ENCODE measurements at regions of chr4 and their contacts with region 1.

Region 1: GRCh38 chr4:40309250-40309774 is 25.8 kb upstream of the CHRNA9 start:
- DNase-seq: peak; percentile 98
- ATAC-seq: peak; percentile 54
- H3K4me3 Mint-ChIP-seq: peak overlapping the region; percentile 54
- H3K27ac Mint-ChIP-seq: peak overlapping the region; percentile 83
- H3K4me1 Mint-ChIP-seq: peaks cover 90% of the 10 kb centered on the region
- H3K27me3 Mint-ChIP-seq: no peaks in the 10 kb centered on the region
- CTCF ChIP-seq: peak; percentile 90

Region 2: GRCh38 chr4:40193016-40193571 is 116.2 kb before region 1 on chr4:
- CTCF ChIA-PET with region 1: interaction called, 14 read pairs
- POLR2A ChIA-PET with region 1: interaction called, 326 read pairs
- intact Hi-C with region 1: no loop called
- DNase-seq: peak; percentile 50
- ATAC-seq: peak; percentile 13
- H3K4me3 Mint-ChIP-seq: peak overlapping the region; percentile 99
- H3K27ac Mint-ChIP-seq: peak overlapping the region; percentile 99
- H3K4me1 Mint-ChIP-seq: peaks cover 57% of the 10 kb centered on the region
- H3K27me3 Mint-ChIP-seq: no peaks in the 10 kb centered on the region
- CTCF ChIP-seq: no peak

Region 3: DNA sequence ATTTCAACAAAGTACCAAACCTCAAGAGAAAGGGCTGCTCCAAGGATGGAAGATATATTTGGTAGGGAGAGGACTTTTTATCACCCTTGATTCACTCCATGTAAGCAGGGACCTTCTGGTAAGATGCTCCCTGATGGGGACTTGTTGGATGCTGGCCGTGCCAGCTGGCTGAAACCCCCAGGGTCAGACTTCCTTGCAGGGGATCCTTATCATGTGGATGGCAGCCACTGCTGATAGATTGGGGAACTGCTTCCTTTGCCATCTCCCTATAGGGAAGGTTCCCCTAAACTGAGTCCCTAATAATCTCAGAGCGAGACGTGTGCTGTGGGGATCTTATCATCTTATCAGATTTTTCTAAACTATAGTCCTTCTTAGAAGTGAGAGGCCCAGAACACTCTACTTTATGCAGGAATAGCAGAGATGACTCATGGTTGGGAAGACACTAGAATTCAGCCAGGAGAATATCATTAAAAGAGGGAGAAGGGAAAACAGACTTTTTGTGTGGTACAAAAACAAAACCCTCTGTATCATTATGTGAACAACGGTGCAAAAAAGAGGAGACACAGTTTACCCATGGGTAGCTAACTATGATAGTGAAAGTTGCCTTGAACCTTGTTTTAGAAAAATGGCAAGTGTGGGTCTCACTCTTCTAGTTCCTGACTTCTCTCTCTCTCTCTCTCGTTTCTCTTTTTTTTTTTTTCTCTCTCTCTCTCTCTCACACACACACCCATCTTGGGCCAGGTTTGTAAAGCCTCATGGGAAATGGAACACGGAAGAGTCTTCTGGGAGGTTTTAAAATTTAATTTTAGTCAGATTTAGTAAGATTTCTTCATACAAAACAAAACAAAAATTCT is 96.4 kb before region 1 on chr4:
- CTCF ChIA-PET with region 1: interaction called, 26 read pairs
- POLR2A ChIA-PET with region 1: interaction called, 326 read pairs
- intact Hi-C with region 1: no loop called
- DNase-seq: peak; percentile 4
- ATAC-seq: peak; percentile 24
- H3K4me3 Mint-ChIP-seq: peak overlapping the region; percentile 99
- H3K27ac Mint-ChIP-seq: peak overlapping the region; percentile 96
- H3K4me1 Mint-ChIP-seq: peaks cover 74% of the 10 kb centered on the region
- H3K27me3 Mint-ChIP-seq: no peaks in the 10 kb centered on the region
- CTCF ChIP-seq: no peak

Region 4: GRCh38 chr4:40247350-40247749 is 62.0 kb before region 1 on chr4:
- CTCF ChIA-PET with region 1: interaction called, 32 read pairs
- POLR2A ChIA-PET with region 1: interaction called, 10 read pairs
- intact Hi-C with region 1: no loop called
- DNase-seq: peak; percentile 80
- ATAC-seq: peak; percentile 55
- H3K4me3 Mint-ChIP-seq: peak overlapping the region; percentile 77
- H3K27ac Mint-ChIP-seq: peak overlapping the region; percentile 95
- H3K4me1 Mint-ChIP-seq: peaks cover 75% of the 10 kb centered on the region
- H3K27me3 Mint-ChIP-seq: no peaks in the 10 kb centered on the region
- CTCF ChIP-seq: no peak

Region 5: DNA sequence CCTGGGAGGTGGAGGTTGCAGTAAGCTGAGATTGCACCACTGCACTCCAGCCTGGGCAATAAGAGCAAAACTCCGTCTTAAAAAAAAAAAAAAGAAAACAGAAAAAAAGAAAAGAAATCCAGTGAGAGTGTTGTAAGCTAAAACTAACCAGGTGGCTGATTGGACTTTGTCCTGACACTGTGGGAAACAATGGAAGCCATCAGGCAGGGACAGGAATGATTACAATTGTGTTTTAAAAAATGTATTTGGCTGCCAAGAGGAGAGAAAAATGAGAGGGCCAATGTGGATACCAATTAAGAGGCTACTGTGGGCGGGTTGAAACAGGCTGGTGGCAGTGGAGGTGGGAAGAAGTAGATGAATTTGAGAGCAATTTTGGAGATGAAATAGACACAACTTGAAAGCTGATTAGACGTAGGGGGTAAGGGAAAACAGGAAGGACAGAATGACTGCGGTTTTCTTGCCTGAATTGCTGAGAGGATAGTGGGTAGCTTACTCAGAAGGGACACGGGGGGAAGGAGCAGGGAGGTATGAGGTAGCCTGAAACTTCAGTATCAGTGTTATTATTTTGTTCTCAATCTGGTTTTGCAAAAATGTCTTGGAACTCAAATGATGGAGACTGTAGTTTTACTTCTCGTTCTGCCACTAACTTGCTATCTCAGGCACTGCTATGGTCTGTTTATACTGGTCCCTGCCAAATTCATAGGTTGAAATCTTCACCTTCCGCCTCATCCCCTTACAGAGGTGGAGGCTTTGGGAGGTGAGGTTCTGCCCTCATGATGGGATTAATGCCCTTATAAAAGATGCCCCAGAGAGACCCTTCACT is 19.7 kb before region 1 on chr4:
- CTCF ChIA-PET with region 1: interaction called, 20 read pairs
- POLR2A ChIA-PET with region 1: interaction called, 6 read pairs
- intact Hi-C with region 1: no loop called
- DNase-seq: no peak
- ATAC-seq: peak; percentile 70
- H3K4me3 Mint-ChIP-seq: peak overlapping the region; percentile 38
- H3K27ac Mint-ChIP-seq: peak overlapping the region; percentile 88
- H3K4me1 Mint-ChIP-seq: peaks cover 57% of the 10 kb centered on the region
- H3K27me3 Mint-ChIP-seq: no peaks in the 10 kb centered on the region
- CTCF ChIP-seq: no peak

Region 6: GRCh38 chr4:40564004-40564403 is 254.7 kb after region 1 on chr4:
- CTCF ChIA-PET with region 1: no interaction called
- POLR2A ChIA-PET with region 1: no interaction called
- intact Hi-C with region 1: no loop called
- DNase-seq: no peak
- ATAC-seq: no peak
- H3K4me3 Mint-ChIP-seq: no peak overlapping the region
- H3K27ac Mint-ChIP-seq: no peak overlapping the region
- H3K4me1 Mint-ChIP-seq: peaks cover 4% of the 10 kb centered on the region
- H3K27me3 Mint-ChIP-seq: peaks cover 1% of the 10 kb centered on the region
- CTCF ChIP-seq: no peak